ENCODE measurements at regions of chr2 and their contacts with region 1.

Region 1: GRCh38 chr2:73212448-73213176 is 1.4 kb upstream of the SMYD5 start:
- DNase-seq: peak; percentile 51 to 84 (median 73)
- ATAC-seq: peak; percentile 67
- H3K4me3 ChIP-seq: no peak overlapping the region
- H3K4me3 Mint-ChIP-seq: peak overlapping the region; percentile 98
- H3K27ac ChIP-seq: no peak overlapping the region
- H3K27ac Mint-ChIP-seq: peak overlapping the region; percentile 30
- H3K4me1 ChIP-seq: peaks cover 26% of the 10 kb centered on the region
- H3K4me1 Mint-ChIP-seq: peaks cover 33% of the 10 kb centered on the region
- H3K27me3 ChIP-seq: no peaks in the 10 kb centered on the region
- H3K27me3 Mint-ChIP-seq: peaks cover 7% of the 10 kb centered on the region
- CTCF ChIP-seq: peak; percentile 81

Region 2: GRCh38 chr2:73071360-73072133 is 141.1 kb before region 1 on chr2 and contains the start of gene SFXN5:
- CTCF ChIA-PET with region 1: interaction called, 5 read pairs
- POLR2A ChIA-PET with region 1: interaction called, 3 read pairs
- intact Hi-C with region 1: loop called (anchors 1 to 2 kb)
- DNase-seq: peak; percentile 89 to 98 (median 95)
- ATAC-seq: peak; percentile 82
- H3K4me3 ChIP-seq: peak within 1 kb of the TSS; percentile 94 to 95
- H3K4me3 Mint-ChIP-seq: peak within 1 kb of the TSS; percentile 96
- H3K27ac ChIP-seq: peak within 1 kb of the TSS; percentile 73 to 86
- H3K27ac Mint-ChIP-seq: peak within 1 kb of the TSS; percentile 92
- H3K4me1 ChIP-seq: peaks cover 13% of the 10 kb centered on the region
- H3K4me1 Mint-ChIP-seq: peaks cover 41% of the 10 kb centered on the region
- H3K27me3 ChIP-seq: no peaks in the 10 kb centered on the region
- H3K27me3 Mint-ChIP-seq: no peaks in the 10 kb centered on the region
- CTCF ChIP-seq: no peak
- total RNA-seq, gene SFXN5: 6.1 to 9.3 TPM

Region 3: DNA sequence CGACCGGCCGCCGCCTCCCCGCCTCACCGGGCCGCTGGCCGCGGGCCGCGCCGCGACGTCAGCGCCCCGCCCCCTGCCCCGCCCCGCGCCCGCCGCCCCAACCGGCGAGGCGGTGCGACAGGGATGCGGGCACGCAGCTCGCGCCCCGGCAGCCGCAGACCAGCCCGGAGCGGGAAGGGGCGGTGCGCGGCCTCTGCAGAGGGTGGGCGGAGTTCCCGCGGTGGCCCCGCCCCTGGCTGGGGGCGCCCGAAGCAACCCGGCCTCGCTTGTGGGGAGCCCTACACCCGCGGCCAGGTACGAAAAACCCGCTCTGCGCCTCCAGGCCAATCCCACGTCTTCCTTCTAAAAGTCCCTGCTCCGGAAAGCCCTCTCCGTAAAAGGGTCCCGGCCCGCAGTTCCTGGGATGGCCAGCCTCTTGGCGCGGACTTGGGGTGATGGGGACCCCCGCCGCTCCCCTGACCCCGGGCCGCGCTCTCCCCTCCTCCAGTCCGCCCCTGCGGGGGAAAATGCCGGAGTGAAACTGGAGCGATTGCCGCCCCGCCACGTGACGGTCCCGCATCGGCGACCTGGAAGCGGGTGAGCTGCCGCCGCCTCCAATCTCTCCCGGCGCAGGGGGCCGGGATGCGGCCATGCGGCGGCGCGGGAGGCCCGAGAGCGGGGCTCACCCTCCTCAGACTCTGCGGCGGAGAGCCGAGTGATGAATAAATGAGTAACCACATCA is 99.5 kb before region 1 on chr2 and contains the start of gene RAB11FIP5:
- CTCF ChIA-PET with region 1: interaction called, 4 read pairs
- POLR2A ChIA-PET with region 1: no interaction called
- intact Hi-C with region 1: loop called in 1 of 2 experiments (anchors 2 kb)
- DNase-seq: peak; percentile 43 to 90 (median 73)
- ATAC-seq: peak; percentile 90
- H3K4me3 ChIP-seq: peak within 1 kb of the TSS; percentile 68 to 70
- H3K4me3 Mint-ChIP-seq: peak within 1 kb of the TSS; percentile 82
- H3K27ac ChIP-seq: peak within 1 kb of the TSS; percentile 32 to 37
- H3K27ac Mint-ChIP-seq: no peak within 1 kb of the TSS
- H3K4me1 ChIP-seq: peaks cover 15% of the 10 kb centered on the region
- H3K4me1 Mint-ChIP-seq: peaks cover 18% of the 10 kb centered on the region
- H3K27me3 ChIP-seq: peaks cover 0 to 3% of the 10 kb centered on the region in 2 experiments
- H3K27me3 Mint-ChIP-seq: no peaks in the 10 kb centered on the region
- CTCF ChIP-seq: no peak
- total RNA-seq, gene RAB11FIP5: 4.7 to 10.7 TPM

Region 4: DNA sequence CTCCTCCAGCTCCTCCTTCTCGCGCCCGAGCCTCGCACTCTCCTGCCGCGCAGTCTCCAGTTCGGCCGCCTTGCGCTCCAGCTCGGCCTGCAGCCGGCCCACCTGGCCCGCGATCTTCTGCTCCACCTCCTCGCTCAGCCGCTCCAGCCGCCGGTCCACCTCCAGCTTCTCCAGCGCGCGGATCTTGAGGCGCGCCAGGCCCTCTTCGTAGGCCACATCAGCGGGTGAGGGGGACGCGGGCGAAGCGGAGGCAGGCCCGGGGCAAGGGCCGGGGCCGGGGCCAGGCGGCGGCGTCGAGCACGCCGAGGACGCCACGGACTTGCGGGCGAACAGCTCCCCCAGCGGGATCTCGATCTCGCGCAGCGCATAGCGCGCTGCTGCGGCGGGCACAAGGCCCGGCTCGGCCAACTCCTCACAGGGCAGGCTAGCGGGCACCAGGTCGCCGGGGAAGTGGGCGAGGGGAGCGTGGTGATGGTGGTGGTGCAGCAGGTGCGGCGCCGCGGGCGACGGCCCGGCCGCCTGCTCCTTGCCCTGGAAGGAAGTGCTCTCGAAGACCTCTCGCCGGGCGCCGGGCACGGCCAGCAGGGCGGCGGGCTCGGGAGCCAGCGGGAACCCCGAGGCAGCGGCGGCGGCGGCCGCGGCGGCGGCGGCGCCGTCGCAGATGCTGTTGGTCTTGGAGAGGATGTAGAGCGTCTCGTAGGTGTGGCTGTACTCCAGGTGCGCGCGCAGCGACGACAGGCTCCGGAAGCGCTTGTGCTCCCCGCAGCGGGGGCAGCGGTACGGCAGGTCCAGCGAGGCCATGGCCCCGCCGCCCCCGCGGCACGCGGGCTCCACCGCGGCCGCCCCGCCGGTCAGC is 56.4 kb after region 1 on chr2:
- CTCF ChIA-PET with region 1: no interaction called
- POLR2A ChIA-PET with region 1: no interaction called
- intact Hi-C with region 1: loop called in 1 of 2 experiments (anchors 2 kb)
- DNase-seq: peak; percentile 52 to 90 (median 81)
- ATAC-seq: peak; percentile 98
- H3K4me3 ChIP-seq: peak overlapping the region; percentile 42 to 52
- H3K4me3 Mint-ChIP-seq: peak overlapping the region; percentile 70
- H3K27ac ChIP-seq: peak overlapping the region in 1 of 2 experiments; percentile 37
- H3K27ac Mint-ChIP-seq: no peak overlapping the region
- H3K4me1 ChIP-seq: peaks cover 12% of the 10 kb centered on the region
- H3K4me1 Mint-ChIP-seq: peaks cover 29% of the 10 kb centered on the region
- H3K27me3 ChIP-seq: no peaks in the 10 kb centered on the region
- H3K27me3 Mint-ChIP-seq: no peaks in the 10 kb centered on the region
- CTCF ChIP-seq: peak; percentile 21

Region 5: DNA sequence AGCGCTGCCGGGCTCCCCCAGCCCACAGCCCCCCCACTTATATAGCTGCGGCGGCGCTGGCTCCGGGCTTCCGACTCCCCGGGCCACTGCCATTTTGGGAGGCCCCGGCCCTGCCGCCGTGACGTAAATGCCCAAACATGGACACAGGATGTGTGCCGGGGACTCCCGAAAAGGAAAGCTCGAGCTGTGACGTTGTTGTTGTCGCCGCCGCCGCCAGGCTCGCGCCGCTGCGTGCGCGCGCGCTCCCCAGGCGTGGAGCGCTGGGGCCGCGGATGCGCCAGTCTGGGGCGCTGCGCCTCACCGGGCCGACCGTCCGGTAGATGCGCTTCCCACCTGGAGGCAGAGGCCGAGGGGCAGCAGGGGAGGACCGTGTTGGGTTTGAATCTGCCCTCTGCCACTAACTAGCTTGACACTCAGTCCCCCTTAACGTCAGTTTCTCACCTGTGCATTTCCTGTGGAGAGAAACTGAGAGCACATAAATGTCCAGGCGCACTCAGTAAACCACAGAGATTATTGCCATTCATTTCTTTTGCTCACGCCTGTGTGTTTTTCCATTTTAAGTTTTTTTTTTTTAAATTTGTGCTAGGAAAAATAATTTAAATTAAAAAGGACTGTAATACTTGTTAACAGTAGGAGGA is 81.0 kb after region 1 on chr2 and contains the start of gene EGR4:
- CTCF ChIA-PET with region 1: interaction called, 13 read pairs
- POLR2A ChIA-PET with region 1: interaction called, 4 read pairs
- intact Hi-C with region 1: loop called in 1 of 2 experiments (anchors 5 kb)
- DNase-seq: peak; percentile 74 to 96 (median 84)
- ATAC-seq: peak; percentile 92
- H3K4me3 ChIP-seq: peak within 1 kb of the TSS; percentile 51 to 73
- H3K4me3 Mint-ChIP-seq: peak within 1 kb of the TSS; percentile 78
- H3K27ac ChIP-seq: no peak within 1 kb of the TSS
- H3K27ac Mint-ChIP-seq: no peak within 1 kb of the TSS
- H3K4me1 ChIP-seq: peaks cover 26% of the 10 kb centered on the region
- H3K4me1 Mint-ChIP-seq: peaks cover 14% of the 10 kb centered on the region
- H3K27me3 ChIP-seq: peaks cover 35 to 37% of the 10 kb centered on the region in 2 experiments
- H3K27me3 Mint-ChIP-seq: peaks cover 62% of the 10 kb centered on the region
- CTCF ChIP-seq: no peak
- total RNA-seq, gene EGR4: 0.14 to 0.22 TPM

Region 6: GRCh38 chr2:74198461-74199274 is 986.1 kb after region 1 on chr2 and contains the start of gene MTHFD2:
- CTCF ChIA-PET with region 1: no interaction called
- POLR2A ChIA-PET with region 1: no interaction called
- intact Hi-C with region 1: loop called in 1 of 2 experiments (anchors 10 kb)
- DNase-seq: peak; percentile 74 to 93 (median 88)
- ATAC-seq: peak; percentile 82
- H3K4me3 ChIP-seq: peak within 1 kb of the TSS; percentile 78 to 86
- H3K4me3 Mint-ChIP-seq: peak within 1 kb of the TSS; percentile 98
- H3K27ac ChIP-seq: peak within 1 kb of the TSS; percentile 87 to 89
- H3K27ac Mint-ChIP-seq: peak within 1 kb of the TSS; percentile 99
- H3K4me1 ChIP-seq: peaks cover 17% of the 10 kb centered on the region
- H3K4me1 Mint-ChIP-seq: peaks cover 25% of the 10 kb centered on the region
- H3K27me3 ChIP-seq: no peaks in the 10 kb centered on the region
- H3K27me3 Mint-ChIP-seq: no peaks in the 10 kb centered on the region
- CTCF ChIP-seq: peak; percentile 77
- total RNA-seq, gene MTHFD2: 25.8 to 26.7 TPM

Measured in CD8-positive, alpha-beta T cell (primary cell).